Activated B cell treated with CpG ODN at 0.5 μM for 24 hours (primary cell): ENCODE measurements at regions of chr2 and their contacts with region 1.

Region 1: DNA sequence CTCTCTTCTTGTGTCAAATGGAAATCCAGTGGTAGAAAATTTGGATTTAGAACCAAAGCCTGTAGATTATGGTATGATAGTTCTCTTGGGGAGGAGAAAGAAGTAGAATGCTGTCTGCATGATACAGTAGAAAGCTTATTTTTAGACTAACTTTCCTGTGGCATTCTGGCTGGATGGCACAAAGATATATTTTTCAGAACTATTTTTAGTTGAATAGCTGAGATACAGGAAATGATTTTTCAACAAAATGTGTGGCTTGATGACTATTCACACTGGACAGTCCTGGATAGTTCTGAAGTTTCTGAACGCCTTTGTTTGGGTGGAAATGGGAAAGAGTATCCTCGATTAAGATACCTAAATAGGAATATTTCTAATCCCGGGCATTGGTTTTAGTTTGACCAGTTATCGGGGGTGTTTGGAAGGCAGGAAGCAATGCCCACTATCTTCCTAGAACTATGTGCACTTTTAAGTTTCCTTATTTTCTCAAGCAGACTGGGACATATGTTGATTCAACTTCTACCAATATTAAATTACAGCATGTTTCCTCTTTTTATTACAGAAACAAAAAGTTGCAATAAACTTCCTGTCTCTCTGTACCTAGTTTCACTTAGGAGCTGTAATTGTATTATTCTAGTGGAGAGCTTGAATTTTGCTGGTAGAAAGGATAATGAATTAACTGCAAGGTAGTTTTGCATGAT is 32.1 kb downstream of the GDF7 start:
- DNase-seq: no peak
- ATAC-seq: peak; percentile 14
- H3K4me3 Mint-ChIP-seq: peak overlapping the region; percentile 30
- H3K27ac Mint-ChIP-seq: peak overlapping the region; percentile 51
- H3K4me1 Mint-ChIP-seq: peaks cover 29% of the 10 kb centered on the region
- H3K27me3 Mint-ChIP-seq: no peaks in the 10 kb centered on the region
- CTCF ChIP-seq: no peak

Region 2: GRCh38 chr2:20666304-20667150 is 32.5 kb before region 1 on chr2 and contains the start of gene GDF7:
- CTCF ChIA-PET with region 1: no interaction called
- POLR2A ChIA-PET with region 1: interaction called, 6 read pairs
- intact Hi-C with region 1: loop called (anchors 1 kb)
- DNase-seq: peak; percentile 67
- ATAC-seq: peak; percentile 78
- H3K4me3 Mint-ChIP-seq: peak within 1 kb of the TSS; percentile 87
- H3K27ac Mint-ChIP-seq: peak within 1 kb of the TSS; percentile 82
- H3K4me1 Mint-ChIP-seq: peaks cover 32% of the 10 kb centered on the region
- H3K27me3 Mint-ChIP-seq: peaks cover 8% of the 10 kb centered on the region
- CTCF ChIP-seq: no peak
- total RNA-seq, gene GDF7: 5.9 and 6.7 TPM in 2 replicates

Region 3: DNA sequence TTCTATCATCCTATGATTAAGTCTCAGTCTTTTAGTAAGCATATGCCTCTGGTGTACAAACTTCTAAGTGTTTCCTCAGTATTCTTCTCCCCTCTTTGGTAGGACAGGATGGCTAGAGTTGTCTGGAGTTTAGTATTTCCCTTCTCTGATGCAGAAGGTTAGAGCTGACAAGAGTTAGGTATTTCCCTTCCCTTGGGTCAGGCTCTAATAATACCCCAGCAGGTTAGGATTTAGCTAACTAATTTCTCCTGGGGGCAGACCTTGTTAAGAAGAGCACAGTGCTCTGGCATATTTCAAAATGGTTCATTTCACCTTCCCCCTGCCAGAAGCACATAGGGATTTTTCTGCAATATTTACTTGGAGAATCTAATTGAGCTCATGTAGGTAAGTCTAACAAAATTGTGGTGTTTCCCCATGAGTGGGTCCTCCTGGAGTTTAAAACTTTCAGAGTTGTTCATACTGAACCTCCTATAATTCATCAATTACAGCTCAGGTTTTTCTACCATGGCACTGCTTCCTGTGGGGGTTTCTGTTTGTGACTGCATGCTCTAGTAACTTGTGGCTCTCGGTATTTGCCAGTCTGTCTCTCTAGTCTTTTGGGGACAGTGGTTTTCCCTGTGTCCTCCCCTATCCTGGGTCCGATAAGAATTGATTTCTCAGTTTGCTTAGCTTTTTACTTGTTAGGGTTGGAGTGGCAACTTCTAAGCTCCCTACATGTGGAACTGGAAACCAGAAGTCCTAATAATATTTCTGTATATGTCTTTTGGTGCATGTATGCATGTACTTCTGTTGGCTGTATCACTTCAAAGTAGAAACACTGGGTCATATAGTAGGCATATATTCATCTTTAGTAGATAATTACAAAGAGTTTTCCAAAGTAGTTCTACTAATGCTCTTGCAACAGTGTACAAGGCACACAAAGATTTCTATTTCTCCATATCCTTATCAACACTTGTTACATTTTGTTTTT is 45.6 kb after region 1 on chr2:
- CTCF ChIA-PET with region 1: no interaction called
- POLR2A ChIA-PET with region 1: no interaction called
- intact Hi-C with region 1: loop called (anchors 5 kb)
- DNase-seq: no peak
- ATAC-seq: peak; percentile 58
- H3K4me3 Mint-ChIP-seq: peak overlapping the region; percentile 59
- H3K27ac Mint-ChIP-seq: peak overlapping the region; percentile 74
- H3K4me1 Mint-ChIP-seq: peaks cover 24% of the 10 kb centered on the region
- H3K27me3 Mint-ChIP-seq: no peaks in the 10 kb centered on the region
- CTCF ChIP-seq: no peak